Ovary (tissue), 10 donors: ENCODE measurements at regions of chr12 and their contacts with region 1.

Region 1: GRCh38 chr12:57127710-57128533 is at the start of gene LRP1:
- DNase-seq: peak; percentile 90 to 94 (median 92)
- H3K4me3 ChIP-seq: peak within 1 kb of the TSS; percentile 88
- H3K27ac ChIP-seq: peak within 1 kb of the TSS; percentile 96 to 99
- H3K4me1 ChIP-seq: peaks cover 19% of the 10 kb centered on the region
- H3K27me3 ChIP-seq: no peaks in the 10 kb centered on the region
- CTCF ChIP-seq: peak in 1 of 3 donors; percentile 31
- EP300 ChIP-seq: no peak
- POLR2A ChIP-seq: peak; percentile 95
- total RNA-seq, gene LRP1: 148 to 640 (median 405) TPM

Region 2: GRCh38 chr12:57166971-57167371 is 39.0 kb after region 1 on chr12:
- intact Hi-C with region 1: loop called in 1 of 4 experiments (anchors 5 kb)
- DNase-seq: peak in 1 of 5 donors; percentile 32
- H3K4me3 ChIP-seq: no peak overlapping the region
- H3K27ac ChIP-seq: peak overlapping the region in 1 of 2 donors; percentile 21
- H3K4me1 ChIP-seq: peaks cover 6% of the 10 kb centered on the region
- H3K27me3 ChIP-seq: no peaks in the 10 kb centered on the region
- CTCF ChIP-seq: no peak
- EP300 ChIP-seq: no peak
- POLR2A ChIP-seq: no peak

Region 3: DNA sequence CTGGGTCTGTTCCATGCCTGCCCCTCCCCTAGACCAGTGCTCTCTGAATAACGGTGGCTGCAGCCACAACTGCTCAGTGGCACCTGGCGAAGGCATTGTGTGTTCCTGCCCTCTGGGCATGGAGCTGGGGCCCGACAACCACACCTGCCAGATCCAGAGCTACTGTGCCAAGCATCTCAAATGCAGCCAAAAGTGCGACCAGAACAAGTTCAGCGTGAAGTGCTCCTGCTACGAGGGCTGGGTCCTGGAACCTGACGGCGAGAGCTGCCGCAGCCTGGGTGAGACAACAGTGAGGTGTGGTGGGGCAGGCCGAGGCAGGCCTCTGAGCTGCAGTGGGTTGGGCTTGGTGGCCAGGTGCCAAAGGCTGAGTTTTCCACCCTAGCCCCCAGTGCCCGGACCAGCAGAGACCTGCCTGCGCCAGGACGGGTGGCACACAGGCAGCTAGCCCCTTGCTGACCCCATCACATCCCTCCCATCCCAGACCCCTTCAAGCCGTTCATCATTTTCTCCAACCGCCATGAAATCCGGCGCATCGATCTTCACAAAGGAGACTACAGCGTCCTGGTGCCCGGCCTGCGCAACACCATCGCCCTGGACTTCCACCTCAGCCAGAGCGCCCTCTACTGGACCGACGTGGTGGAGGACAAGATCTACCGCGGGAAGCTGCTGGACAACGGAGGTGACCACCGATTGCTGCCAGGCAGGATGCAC is 47.7 kb after region 1 on chr12:
- intact Hi-C with region 1: loop called (anchors 2 to 5 kb)
- DNase-seq: peak; percentile 83 to 92 (median 90)
- H3K4me3 ChIP-seq: no peak overlapping the region
- H3K27ac ChIP-seq: peak overlapping the region in 1 of 2 donors; percentile 43
- H3K4me1 ChIP-seq: peaks cover 5% of the 10 kb centered on the region
- H3K27me3 ChIP-seq: no peaks in the 10 kb centered on the region
- CTCF ChIP-seq: peak; percentile 72 to 90 (median 87)
- EP300 ChIP-seq: no peak
- POLR2A ChIP-seq: no peak

Region 4: DNA sequence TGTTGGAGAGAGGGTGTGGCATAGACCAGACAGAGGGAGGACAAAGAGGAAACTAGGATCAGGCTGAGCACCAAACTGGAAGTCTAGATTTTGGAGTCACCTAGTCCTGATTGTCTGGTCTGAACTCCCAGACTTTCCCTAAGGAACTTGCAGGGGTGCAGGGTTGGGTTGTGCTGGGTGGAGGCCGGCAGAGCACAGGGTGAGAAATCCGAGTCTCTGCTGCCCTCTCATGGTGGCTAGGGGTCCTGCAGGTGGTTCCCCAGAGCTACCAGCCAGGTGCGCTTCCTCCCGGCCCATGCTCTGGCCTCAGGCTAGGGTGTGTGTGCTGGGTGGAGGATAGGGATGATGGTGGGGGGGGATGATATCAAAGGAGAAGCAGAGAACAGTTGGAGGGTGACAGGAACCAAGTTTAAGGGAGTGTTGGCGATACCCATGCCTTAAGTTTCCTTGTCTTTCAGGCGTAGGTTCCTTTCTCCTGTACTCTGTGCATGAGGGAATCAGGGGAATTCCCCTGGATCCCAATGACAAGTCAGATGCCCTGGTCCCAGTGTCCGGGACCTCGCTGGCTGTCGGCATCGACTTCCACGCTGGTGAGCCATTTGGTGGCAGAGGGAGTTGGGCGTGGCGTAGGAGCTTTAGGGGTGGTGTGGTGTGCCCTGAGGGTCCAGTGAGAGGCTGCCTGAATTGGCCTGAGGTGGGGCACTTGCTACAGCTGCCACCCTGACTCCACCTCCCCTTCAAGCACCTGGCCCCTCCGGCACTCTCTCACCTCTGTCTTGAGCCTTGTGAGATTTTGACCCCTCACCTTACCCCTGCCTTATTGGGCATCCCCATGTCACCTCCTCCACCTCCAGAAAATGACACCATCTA is 55.2 kb after region 1 on chr12:
- intact Hi-C with region 1: loop called in 3 of 4 experiments (anchors 2 to 5 kb)
- DNase-seq: peak; percentile 67 to 87 (median 83)
- H3K4me3 ChIP-seq: no peak overlapping the region
- H3K27ac ChIP-seq: no peak overlapping the region
- H3K4me1 ChIP-seq: no peaks in the 10 kb centered on the region
- H3K27me3 ChIP-seq: no peaks in the 10 kb centered on the region
- CTCF ChIP-seq: peak; percentile 58 to 92 (median 91)
- EP300 ChIP-seq: no peak
- POLR2A ChIP-seq: peak; percentile 13